ENCODE measurements at regions of chr10 and their contacts with region 1.

Region 1: GRCh38 chr10:119489991-119490326 is 52.6 kb downstream of the RGS10 start:
- DNase-seq: no peak
- H3K4me3 ChIP-seq: peak overlapping the region; percentile 68
- H3K27ac ChIP-seq: no peak overlapping the region
- H3K4me1 ChIP-seq: peaks cover 14% of the 10 kb centered on the region
- CTCF ChIP-seq: peak; percentile 49

Region 2: GRCh38 chr10:118725886-118726500 is 764.0 kb before region 1 on chr10:
- CTCF ChIA-PET with region 1: no interaction called
- POLR2A ChIA-PET with region 1: interaction called, 10 read pairs
- intact Hi-C with region 1: no loop called
- DNase-seq: no peak
- H3K4me3 ChIP-seq: no peak overlapping the region
- H3K27ac ChIP-seq: no peak overlapping the region
- H3K4me1 ChIP-seq: peaks cover 19% of the 10 kb centered on the region
- CTCF ChIP-seq: no peak

Region 3: GRCh38 chr10:119199231-119199992 is 290.5 kb before region 1 on chr10:
- CTCF ChIA-PET with region 1: no interaction called
- POLR2A ChIA-PET with region 1: interaction called, 3 read pairs
- intact Hi-C with region 1: loop called (anchors 1 kb)
- DNase-seq: peak; percentile 85
- H3K4me3 ChIP-seq: no peak overlapping the region
- H3K27ac ChIP-seq: no peak overlapping the region
- H3K4me1 ChIP-seq: no peaks in the 10 kb centered on the region
- CTCF ChIP-seq: peak; percentile 91

Region 4: GRCh38 chr10:119207367-119207668 is 282.6 kb before region 1 on chr10 and contains the start of gene GRK5:
- CTCF ChIA-PET with region 1: no interaction called
- POLR2A ChIA-PET with region 1: interaction called, 3 read pairs
- intact Hi-C with region 1: loop called (anchors 1 kb)
- DNase-seq: peak; percentile 98
- H3K4me3 ChIP-seq: peak within 1 kb of the TSS; percentile 75
- H3K27ac ChIP-seq: peak within 1 kb of the TSS; percentile 69
- H3K4me1 ChIP-seq: peaks cover 28% of the 10 kb centered on the region
- CTCF ChIP-seq: no peak
- total RNA-seq, gene GRK5: 4.2 and 4.7 TPM in 2 replicates

Region 5: GRCh38 chr10:119416855-119417254 is 73.1 kb before region 1 on chr10:
- CTCF ChIA-PET with region 1: interaction called, 3 read pairs
- POLR2A ChIA-PET with region 1: interaction called, 6 read pairs
- intact Hi-C with region 1: loop called (anchors 2 kb)
- DNase-seq: peak; percentile 82
- H3K4me3 ChIP-seq: no peak overlapping the region
- H3K27ac ChIP-seq: no peak overlapping the region
- H3K4me1 ChIP-seq: no peaks in the 10 kb centered on the region
- CTCF ChIP-seq: peak; percentile 89

Region 6: GRCh38 chr10:119445311-119445934 is 44.5 kb before region 1 on chr10:
- CTCF ChIA-PET with region 1: interaction called, 5 read pairs
- POLR2A ChIA-PET with region 1: no interaction called
- intact Hi-C with region 1: loop called (anchors 1 kb)
- DNase-seq: peak; percentile 82
- H3K4me3 ChIP-seq: no peak overlapping the region
- H3K27ac ChIP-seq: no peak overlapping the region
- H3K4me1 ChIP-seq: peaks cover 26% of the 10 kb centered on the region
- CTCF ChIP-seq: peak; percentile 92

Region 7: DNA sequence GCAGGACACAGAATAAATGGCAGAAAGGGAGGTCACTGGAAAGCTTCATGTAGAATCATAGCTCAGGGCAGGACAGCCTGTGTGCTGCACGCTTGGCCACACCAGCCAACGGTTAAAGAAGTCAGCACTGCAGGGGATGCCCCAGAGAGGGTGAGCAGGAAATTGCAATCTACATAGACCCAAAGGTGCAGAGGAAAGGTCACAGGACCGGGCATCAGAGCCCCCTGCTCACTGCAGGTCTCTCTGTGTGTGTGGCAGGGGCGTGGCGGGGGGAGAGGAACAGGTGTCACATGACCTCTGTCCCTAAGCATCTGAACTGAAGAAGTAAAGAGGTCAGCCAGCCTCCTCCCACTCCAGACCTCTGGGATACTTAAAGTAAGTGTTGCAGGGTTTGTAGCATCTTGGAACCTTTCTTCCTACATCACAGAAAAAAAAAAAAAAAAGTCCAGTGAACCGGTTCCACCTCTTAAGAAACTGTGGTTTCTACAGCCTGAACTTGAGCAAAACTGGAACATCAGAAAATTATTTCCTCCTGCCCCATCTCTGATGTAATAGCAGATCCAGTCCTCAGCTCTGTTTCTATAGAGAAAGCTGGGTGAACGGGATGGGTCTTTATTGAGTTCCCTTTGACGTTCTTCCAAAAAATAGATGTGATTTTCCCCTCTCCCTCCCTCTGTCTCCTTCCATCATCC is 11.7 kb before region 1 on chr10:
- CTCF ChIA-PET with region 1: interaction called, 4 read pairs
- POLR2A ChIA-PET with region 1: interaction called, 31 read pairs
- intact Hi-C with region 1: no loop called
- DNase-seq: peak; percentile 90
- H3K4me3 ChIP-seq: peak overlapping the region; percentile 59
- H3K27ac ChIP-seq: peak overlapping the region; percentile 77
- H3K4me1 ChIP-seq: peaks cover 32% of the 10 kb centered on the region
- CTCF ChIP-seq: no peak